Endothelial cell of umbilical vein (primary cell): ENCODE measurements at regions of chr9 and their contacts with region 1.

Region 1: DNA sequence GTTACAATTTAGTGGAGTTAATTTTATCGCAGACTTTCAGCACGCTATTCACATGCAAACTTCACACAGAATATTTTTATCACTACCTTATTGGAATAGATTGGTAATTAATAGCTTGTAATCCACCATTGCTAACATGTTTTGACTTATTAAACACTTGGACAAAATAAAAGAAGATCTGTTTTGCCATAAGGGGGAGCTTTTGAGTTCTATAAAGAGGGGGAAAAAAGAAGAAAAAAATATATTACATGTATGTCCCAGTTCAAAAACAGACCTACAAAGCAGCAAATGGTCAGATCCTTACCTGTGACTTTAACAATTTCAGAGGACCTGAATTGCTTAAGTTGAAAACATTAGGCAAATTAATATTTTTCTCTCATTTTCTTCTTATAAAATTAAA is 1.2 kb upstream of the PAPPA start:
- DNase-seq: no peak
- H3K4me3 ChIP-seq: peak overlapping the region in 1 of 3 experiments; percentile 18
- H3K27ac ChIP-seq: peak overlapping the region; percentile 24
- H3K4me1 ChIP-seq: peaks cover 3% of the 10 kb centered on the region
- H3K27me3 ChIP-seq: peaks cover 0 to 22% of the 10 kb centered on the region in 2 experiments
- CTCF ChIP-seq: peak; percentile 9 to 17
- POLR2A ChIP-seq: no peak

Region 2: GRCh38 chr9:116163293-116164055 is 11.1 kb after region 1 on chr9:
- CTCF ChIA-PET with region 1: interaction called, 13 read pairs
- POLR2A ChIA-PET with region 1: no interaction called
- dilution Hi-C with region 1: no loop called
- intact Hi-C with region 1: no loop called
- DNase-seq: no peak
- H3K4me3 ChIP-seq: no peak overlapping the region
- H3K27ac ChIP-seq: no peak overlapping the region
- H3K4me1 ChIP-seq: no peaks in the 10 kb centered on the region
- H3K27me3 ChIP-seq: no peaks in the 10 kb centered on the region
- CTCF ChIP-seq: peak; percentile 20 to 28
- POLR2A ChIP-seq: no peak

Region 3: DNA sequence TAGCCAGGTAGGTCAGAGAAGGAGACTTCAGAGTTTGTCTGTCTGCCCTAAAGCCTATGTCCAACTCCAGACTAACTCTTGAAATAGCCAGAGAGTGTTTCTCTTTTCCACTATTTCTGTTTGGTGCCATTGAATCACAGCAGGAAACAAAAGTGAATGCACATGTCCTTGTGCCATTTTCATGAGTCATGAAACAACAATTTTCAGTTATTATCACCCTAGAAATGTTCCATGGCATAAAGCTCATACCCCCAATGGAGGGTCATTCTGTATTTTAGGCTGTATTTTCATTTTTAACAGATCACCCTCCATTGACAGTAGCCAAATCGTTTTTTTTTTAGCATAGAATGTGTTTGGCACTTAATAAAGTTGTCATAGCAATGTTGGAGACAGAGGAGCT is 125.9 kb after region 1 on chr9:
- CTCF ChIA-PET with region 1: interaction called, 3 read pairs
- POLR2A ChIA-PET with region 1: no interaction called
- dilution Hi-C with region 1: no loop called
- intact Hi-C with region 1: loop called (anchors 1 kb)
- DNase-seq: peak; percentile 16
- H3K4me3 ChIP-seq: no peak overlapping the region
- H3K27ac ChIP-seq: no peak overlapping the region
- H3K4me1 ChIP-seq: peaks cover 3% of the 10 kb centered on the region
- H3K27me3 ChIP-seq: no peaks in the 10 kb centered on the region
- CTCF ChIP-seq: no peak
- POLR2A ChIP-seq: no peak

Region 4: GRCh38 chr9:116572095-116572748 is 419.8 kb after region 1 on chr9:
- CTCF ChIA-PET with region 1: interaction called, 7 read pairs
- POLR2A ChIA-PET with region 1: no interaction called
- dilution Hi-C with region 1: no loop called
- intact Hi-C with region 1: loop called (anchors 2 kb)
- DNase-seq: peak; percentile 41
- H3K4me3 ChIP-seq: no peak overlapping the region
- H3K27ac ChIP-seq: no peak overlapping the region
- H3K4me1 ChIP-seq: no peaks in the 10 kb centered on the region
- H3K27me3 ChIP-seq: no peaks in the 10 kb centered on the region
- CTCF ChIP-seq: peak; percentile 64 to 87
- POLR2A ChIP-seq: no peak

Region 5: DNA sequence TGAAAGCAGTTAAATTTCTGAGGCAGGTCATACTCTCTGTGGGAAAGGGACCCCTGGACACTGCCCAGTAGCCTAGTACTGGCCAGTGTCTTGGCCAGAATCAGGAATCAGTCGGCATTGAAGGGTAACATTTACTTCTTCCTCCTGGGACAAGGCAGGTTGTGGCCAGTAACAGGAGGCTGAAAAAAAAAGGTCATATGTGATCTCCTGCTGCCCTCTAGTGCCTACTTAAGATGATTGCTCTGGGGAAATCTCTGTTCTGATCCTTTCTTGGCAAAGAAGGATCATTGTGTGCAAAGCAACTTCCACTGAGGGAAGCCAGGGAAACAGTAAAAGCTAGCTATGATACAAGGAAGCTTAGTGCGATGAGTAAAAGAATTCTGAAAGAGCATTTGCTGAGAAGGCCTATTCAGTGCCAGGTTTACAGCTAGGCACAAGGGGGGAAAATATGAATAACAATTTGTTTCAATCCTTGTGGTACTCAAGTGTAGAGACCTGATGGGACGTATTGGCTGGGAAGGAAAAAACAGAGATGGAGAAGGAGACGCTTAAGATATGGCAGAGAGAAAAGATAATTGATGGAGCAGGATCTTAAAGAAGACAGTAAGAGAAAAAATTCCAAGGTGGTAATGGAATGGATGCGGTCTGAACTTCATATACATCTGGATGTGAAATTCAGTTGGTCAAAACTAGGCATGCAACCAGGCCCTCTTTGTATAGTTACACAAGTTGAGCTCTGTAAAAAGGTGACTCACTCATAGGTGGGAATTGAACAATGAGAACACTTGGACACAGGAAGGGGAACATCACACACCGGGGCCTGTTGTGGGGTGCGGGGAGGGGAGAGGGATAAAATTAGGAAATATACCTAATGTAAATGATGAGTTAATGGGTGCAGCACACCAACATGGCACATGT is 508.9 kb after region 1 on chr9:
- CTCF ChIA-PET with region 1: interaction called, 4 read pairs
- POLR2A ChIA-PET with region 1: no interaction called
- dilution Hi-C with region 1: no loop called
- intact Hi-C with region 1: loop called (anchors 1 kb)
- DNase-seq: peak; percentile 58
- H3K4me3 ChIP-seq: no peak overlapping the region
- H3K27ac ChIP-seq: no peak overlapping the region
- H3K4me1 ChIP-seq: no peaks in the 10 kb centered on the region
- H3K27me3 ChIP-seq: no peaks in the 10 kb centered on the region
- CTCF ChIP-seq: peak; percentile 51 to 59
- POLR2A ChIP-seq: no peak